Caco-2 (cell line): ENCODE measurements at regions of chr12 and their contacts with region 1.

Region 1: GRCh38 chr12:89529738-89530137 is 3.9 kb upstream of the POC1B start:
- DNase-seq: peak in 1 of 2 experiments; percentile 41
- H3K4me3 ChIP-seq: no peak overlapping the region
- H3K4me3 Mint-ChIP-seq: no peak overlapping the region
- H3K27ac Mint-ChIP-seq: no peak overlapping the region
- H3K4me1 ChIP-seq: no peaks in the 10 kb centered on the region; the same call in 1 of the 2 replicates
- H3K4me1 Mint-ChIP-seq: no peaks in the 10 kb centered on the region
- H3K27me3 ChIP-seq: no peaks in the 10 kb centered on the region
- H3K27me3 Mint-ChIP-seq: no peaks in the 10 kb centered on the region
- CTCF ChIP-seq: peak; percentile 62 to 69

Region 2: GRCh38 chr12:89019408-89020120 is 510.2 kb before region 1 on chr12:
- CTCF ChIA-PET with region 1: interaction called, 3 read pairs
- POLR2A ChIA-PET with region 1: no interaction called
- intact Hi-C with region 1: loop called (anchors 1 kb)
- DNase-seq: peak; percentile 80 to 82
- H3K4me3 ChIP-seq: peak overlapping the region; percentile 36
- H3K4me3 Mint-ChIP-seq: no peak overlapping the region
- H3K27ac Mint-ChIP-seq: no peak overlapping the region
- H3K4me1 ChIP-seq: peaks cover 11% of the 10 kb centered on the region
- H3K4me1 Mint-ChIP-seq: peaks cover 10% of the 10 kb centered on the region
- H3K27me3 ChIP-seq: no peaks in the 10 kb centered on the region
- H3K27me3 Mint-ChIP-seq: no peaks in the 10 kb centered on the region
- CTCF ChIP-seq: peak; percentile 83 to 85

Region 3: GRCh38 chr12:89439941-89440340 is 89.8 kb before region 1 on chr12:
- CTCF ChIA-PET with region 1: no interaction called
- POLR2A ChIA-PET with region 1: no interaction called
- intact Hi-C with region 1: no loop called
- DNase-seq: no peak
- H3K4me3 ChIP-seq: no peak overlapping the region
- H3K4me3 Mint-ChIP-seq: no peak overlapping the region
- H3K27ac Mint-ChIP-seq: no peak overlapping the region
- H3K4me1 ChIP-seq: no peaks in the 10 kb centered on the region
- H3K4me1 Mint-ChIP-seq: no peaks in the 10 kb centered on the region
- H3K27me3 ChIP-seq: no peaks in the 10 kb centered on the region
- H3K27me3 Mint-ChIP-seq: no peaks in the 10 kb centered on the region
- CTCF ChIP-seq: no peak

Region 4: GRCh38 chr12:89470741-89471509 is 58.8 kb before region 1 on chr12:
- CTCF ChIA-PET with region 1: no interaction called
- POLR2A ChIA-PET with region 1: no interaction called
- intact Hi-C with region 1: loop called (anchors 1 kb)
- DNase-seq: peak in 1 of 2 experiments; percentile 34
- H3K4me3 ChIP-seq: no peak overlapping the region
- H3K4me3 Mint-ChIP-seq: no peak overlapping the region
- H3K27ac Mint-ChIP-seq: no peak overlapping the region
- H3K4me1 ChIP-seq: no peaks in the 10 kb centered on the region
- H3K4me1 Mint-ChIP-seq: no peaks in the 10 kb centered on the region
- H3K27me3 ChIP-seq: no peaks in the 10 kb centered on the region
- H3K27me3 Mint-ChIP-seq: no peaks in the 10 kb centered on the region
- CTCF ChIP-seq: peak; percentile 58 to 61